Left colon (tissue), 2 donors: ENCODE measurements at regions of chr5 and their contacts with region 1.

Region 1: DNA sequence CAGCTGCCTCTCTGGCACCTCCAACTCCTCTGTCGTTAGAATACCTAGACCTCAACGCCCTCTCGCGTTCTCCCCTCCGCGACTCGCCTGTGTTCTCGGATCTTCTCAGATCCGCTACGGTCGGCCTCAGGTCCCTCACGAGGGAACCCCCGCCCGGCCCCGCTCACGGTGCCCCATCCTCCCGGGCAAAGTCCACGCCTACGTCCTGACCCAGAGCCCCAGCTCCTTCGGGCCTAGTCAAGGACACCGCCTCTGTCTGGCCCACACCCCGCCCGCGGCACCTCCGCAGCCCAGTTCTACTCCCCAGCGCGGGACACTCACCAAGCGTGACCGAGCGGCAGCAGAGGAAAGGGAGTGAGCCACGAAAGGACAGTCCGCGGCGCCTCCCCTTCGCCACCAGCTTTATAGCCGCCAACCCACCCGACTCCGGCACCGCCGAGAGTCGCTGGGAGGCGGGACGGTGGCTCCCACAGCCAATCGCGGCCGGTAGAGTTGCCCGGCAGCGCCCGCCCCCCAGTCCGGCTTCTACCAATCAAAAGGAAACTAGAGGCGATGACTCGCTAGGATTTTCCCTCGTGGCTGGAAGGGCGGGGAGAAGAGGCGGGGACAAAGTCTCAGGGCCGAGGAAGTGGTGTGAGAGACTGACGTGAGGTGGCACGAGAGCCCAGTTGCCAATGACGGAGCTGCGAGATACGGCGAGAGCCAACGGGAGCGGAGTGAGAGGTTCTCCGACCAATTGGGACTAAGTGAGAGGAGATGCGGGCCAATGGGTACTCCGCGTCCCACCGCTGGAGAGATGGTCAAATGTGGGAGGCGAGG is at the start of gene HMGCS1:
- DNase-seq: peak; percentile 98 to 99
- ATAC-seq: peak; percentile 91
- total RNA-seq, gene HMGCS1: 153 to 377 TPM

Region 2: GRCh38 chr5:43484106-43484849 is 171.0 kb after region 1 on chr5:
- intact Hi-C with region 1: loop called in 1 of 2 experiments (anchors 10 kb)
- DNase-seq: peak; percentile 79 to 88
- ATAC-seq: peak; percentile 76

Region 3: GRCh38 chr5:43497311-43498104 is 184.3 kb after region 1 on chr5:
- intact Hi-C with region 1: no loop called
- DNase-seq: peak in 1 of 2 donors; percentile 37
- ATAC-seq: peak; percentile 100

Region 4: GRCh38 chr5:44051591-44051990 is 738.3 kb after region 1 on chr5:
- intact Hi-C with region 1: no loop called
- DNase-seq: no peak
- ATAC-seq: no peak